ENCODE measurements at regions of chr5 and their contacts with region 1.

Region 1: DNA sequence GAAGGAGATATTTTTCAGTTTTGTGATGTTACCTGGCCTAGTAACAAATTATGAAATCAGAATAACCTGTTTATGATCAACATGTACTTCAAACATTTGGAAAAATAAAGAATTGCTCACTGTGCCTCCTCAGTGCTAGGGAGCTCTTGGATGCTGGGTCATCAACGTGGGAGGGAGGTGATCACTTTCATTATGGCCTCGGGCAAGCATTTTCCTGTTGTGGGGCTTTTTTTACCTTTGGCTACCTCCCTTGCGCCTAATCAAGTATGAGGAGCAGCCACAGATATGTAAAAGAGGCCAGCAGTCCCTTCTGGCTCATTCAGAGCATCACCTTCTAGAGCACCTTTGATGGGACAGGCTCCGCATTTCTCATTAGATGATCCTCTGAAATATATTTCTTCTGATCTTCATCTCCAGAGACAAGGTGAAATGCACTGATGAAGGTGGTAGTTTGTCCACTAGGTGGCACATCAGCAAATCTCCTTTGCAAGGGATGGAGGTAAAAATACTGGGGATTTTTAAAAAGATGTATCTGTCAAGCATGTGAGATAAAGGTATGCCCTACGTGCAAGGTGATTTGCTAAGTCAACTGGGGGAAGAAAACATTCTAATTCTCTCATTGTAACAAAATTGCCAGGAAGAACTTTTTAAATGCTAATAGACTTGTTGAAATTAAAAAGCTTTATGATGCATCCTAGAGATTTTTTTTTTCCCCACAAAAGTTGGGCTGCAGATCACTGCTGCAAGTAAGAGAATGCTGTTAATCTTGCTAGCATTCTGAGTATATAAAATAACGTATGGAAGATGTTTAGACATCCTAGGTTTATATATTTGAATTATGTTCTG is 218.2 kb downstream of the MAST4 start:
- DNase-seq: no peak
- H3K4me3 ChIP-seq: no peak overlapping the region
- CTCF ChIP-seq: peak; percentile 58

Region 2: DNA sequence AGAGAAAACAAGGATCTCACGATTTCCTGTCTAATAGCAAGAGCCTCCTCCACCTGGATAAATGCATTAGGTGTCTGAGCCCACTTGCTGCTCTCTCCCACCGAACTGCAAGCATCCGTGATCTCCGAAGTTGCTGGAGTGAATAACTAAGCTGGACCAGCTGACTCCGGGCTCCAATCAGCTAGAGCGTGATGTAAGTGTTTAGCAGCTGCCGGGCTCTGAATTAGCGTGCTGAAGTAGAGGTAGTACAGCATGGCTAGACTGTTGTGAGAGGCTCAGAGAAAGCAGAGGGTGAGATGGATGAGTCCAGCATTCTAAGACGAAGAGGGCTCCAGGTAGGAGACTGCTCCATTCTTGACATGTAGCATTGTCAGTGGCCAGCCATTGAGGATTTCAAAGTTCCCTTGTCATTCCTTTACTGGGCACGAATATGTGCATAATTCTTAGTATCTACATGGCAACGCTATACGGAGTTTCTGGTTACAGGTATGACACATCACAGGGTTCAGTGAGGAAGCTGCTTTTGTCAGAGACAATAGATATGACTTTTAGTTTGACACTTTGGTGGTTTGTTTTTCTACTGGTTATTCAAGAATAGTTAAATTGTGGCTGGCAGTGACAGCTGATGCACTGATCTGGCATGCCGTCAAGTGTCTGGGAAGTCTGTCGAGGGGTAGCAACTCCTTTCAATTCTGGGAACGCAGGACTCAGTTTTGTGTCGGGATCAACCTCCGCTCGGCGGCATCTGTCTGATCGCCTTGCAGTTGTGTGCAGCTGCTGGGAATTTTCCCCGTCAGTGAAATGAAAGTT is 14.4 kb after region 1 on chr5:
- CTCF ChIA-PET with region 1: interaction called, 46 read pairs
- POLR2A ChIA-PET with region 1: no interaction called
- DNase-seq: no peak
- H3K4me3 ChIP-seq: peak overlapping the region; percentile 54
- CTCF ChIP-seq: no peak

Region 3: GRCh38 chr5:66864331-66864840 is 50.0 kb after region 1 on chr5:
- CTCF ChIA-PET with region 1: interaction called, 19 read pairs
- POLR2A ChIA-PET with region 1: no interaction called
- DNase-seq: no peak
- H3K4me3 ChIP-seq: no peak overlapping the region
- CTCF ChIP-seq: peak; percentile 60

Region 4: DNA sequence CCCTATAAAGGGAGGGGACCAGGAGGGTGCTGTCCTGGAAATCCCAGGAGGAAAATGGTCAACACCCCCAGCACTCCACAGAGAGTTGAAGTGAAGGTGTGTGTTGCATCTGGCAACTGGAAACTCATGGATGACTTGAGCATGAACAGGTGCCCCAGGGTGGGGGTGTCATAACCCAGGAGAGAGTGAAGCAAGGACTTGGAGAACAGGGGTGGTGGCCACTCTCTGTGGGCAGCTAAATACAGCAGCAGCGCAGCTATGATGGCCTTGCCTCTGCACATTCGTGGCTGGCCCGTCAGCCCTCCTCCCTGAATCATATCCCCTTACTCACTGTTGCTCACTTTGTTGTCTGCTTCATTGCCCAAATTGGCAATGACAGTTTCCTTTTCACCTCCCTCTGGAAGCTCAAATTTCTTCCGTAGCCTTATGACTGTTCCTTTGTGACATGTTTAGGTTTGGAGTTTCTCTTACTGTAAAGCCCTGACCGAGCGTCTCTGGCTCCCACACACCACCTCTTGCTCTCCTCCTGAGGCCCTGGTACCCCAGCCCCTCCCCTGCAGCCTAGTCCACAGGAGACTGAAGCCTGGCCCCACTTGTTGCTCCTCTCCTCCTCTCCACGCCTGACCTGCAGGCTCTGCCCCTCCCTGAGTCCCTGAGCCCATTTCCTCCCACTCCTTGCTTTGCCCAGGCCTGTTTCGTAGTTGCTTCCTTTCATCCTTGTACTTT is 196.5 kb after region 1 on chr5:
- CTCF ChIA-PET with region 1: no interaction called
- POLR2A ChIA-PET with region 1: no interaction called
- DNase-seq: no peak
- H3K4me3 ChIP-seq: no peak overlapping the region; the same call in none of the 2 replicates
- CTCF ChIP-seq: no peak

Region 5: GRCh38 chr5:67149951-67150523 is 335.7 kb after region 1 on chr5:
- CTCF ChIA-PET with region 1: interaction called, 58 read pairs
- POLR2A ChIA-PET with region 1: no interaction called
- DNase-seq: no peak
- H3K4me3 ChIP-seq: no peak overlapping the region
- CTCF ChIP-seq: peak; percentile 49

Region 6: DNA sequence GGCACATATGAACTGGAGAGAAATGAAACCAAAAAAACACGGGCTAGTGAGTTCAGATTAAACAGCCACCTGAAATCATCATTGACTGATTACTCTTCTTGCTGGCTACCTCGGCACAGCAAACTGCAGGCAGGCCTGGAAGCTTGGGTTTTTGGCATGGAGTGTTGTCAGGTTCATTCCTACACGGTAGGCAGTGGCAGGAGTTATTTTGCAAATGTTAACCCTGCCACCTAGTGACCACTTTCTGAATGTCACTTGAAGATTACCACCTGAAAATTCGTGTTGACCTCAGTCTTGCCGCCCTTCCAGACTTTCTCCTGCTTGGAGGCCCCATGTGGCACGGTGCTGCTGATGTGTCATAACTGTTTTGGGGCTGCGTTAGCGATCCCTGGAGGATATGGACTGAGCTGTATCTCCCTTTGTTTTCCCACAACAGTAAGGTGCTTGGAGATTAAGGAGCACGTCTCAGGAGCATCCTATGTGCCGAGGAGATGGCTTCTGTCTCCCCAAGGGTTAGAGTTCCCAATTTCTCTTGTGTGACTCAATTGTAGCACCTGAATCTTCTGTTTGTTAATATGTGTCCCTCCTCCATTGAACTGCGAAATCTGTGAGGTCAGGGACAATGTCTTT is 394.9 kb after region 1 on chr5:
- CTCF ChIA-PET with region 1: interaction called, 33 read pairs
- POLR2A ChIA-PET with region 1: no interaction called
- DNase-seq: no peak
- H3K4me3 ChIP-seq: no peak overlapping the region
- CTCF ChIP-seq: peak; percentile 50

Region 7: DNA sequence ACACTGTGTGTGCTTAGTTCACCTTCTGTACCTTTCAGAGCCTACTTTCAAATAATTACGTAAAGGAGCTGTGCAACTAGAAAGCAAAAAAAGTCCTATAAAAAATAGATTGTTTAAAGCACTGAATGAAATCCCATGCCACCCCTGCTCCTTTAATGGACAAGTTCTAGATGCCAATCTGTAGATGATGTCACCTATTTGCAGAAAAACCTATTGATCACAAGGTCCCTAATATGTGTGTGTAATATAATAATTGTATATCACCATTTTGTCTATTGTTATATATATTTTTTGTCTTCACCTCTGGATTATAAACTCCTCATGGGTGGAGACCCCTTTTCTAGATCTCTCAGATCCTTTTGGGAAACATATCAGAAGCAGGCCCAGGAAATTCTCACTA is 419.9 kb after region 1 on chr5:
- CTCF ChIA-PET with region 1: no interaction called
- POLR2A ChIA-PET with region 1: no interaction called
- DNase-seq: no peak
- H3K4me3 ChIP-seq: no peak overlapping the region
- CTCF ChIP-seq: no peak

Region 8: GRCh38 chr5:67669916-67670315 is 855.5 kb after region 1 on chr5:
- CTCF ChIA-PET with region 1: no interaction called
- POLR2A ChIA-PET with region 1: no interaction called
- DNase-seq: no peak
- H3K4me3 ChIP-seq: no peak overlapping the region
- CTCF ChIP-seq: no peak